Left colon (tissue), 2 donors: ENCODE measurements at regions of chrX and their contacts with region 1.

Region 1: DNA sequence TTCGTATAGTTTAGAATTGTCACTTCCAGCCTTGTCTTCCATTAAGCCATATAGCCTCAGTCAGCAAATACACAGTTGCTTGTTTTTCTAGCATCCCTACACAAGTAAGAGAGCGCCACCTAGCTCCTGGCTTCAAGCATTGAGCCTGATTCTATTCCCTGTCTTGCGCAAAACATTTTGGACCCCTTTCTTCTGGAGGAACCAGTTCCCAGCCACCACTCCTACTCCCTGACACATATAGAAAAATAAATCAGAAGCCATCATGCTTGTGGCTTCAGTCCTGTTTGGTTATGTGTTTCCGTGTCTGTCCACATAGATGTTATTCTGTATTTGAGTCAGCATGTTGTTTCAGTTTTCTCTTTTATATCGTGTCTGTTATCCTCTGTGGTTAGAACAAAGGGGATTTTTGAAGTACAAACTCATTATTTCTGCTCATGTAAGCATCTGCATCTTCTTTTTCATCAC is 59.9 kb downstream of the GK start:
- DNase-seq: peak; percentile 34 to 65
- ATAC-seq: peak; percentile 83

Region 2: DNA sequence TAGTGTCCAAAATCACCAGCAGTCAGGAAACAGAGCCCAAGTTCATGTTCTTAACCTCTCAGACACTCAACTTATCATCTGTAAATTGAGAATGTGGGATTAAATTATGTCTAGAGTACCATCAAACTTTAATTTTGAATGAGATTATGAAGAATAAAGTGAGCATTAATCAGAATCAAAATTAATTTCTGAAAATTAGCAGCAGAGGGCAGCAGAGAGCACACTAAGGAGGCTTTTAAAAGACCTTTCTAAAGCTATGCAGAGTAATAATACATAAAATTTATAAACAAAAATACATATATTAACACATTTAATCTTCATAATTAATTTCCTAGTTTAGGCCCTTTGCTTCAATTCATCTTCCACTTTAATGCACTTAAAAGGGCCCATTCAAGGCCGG is 142.6 kb before region 1 on chrX:
- intact Hi-C with region 1: loop called in 1 of 2 experiments (anchors 10 kb)
- DNase-seq: no peak
- ATAC-seq: no peak

Region 3: GRCh38 chrX:30635630-30636029 is 77.5 kb before region 1 on chrX:
- intact Hi-C with region 1: loop called in 1 of 2 experiments (anchors 5 kb)
- DNase-seq: no peak
- ATAC-seq: peak; percentile 36